ENCODE measurements at regions of chr11 and their contacts with region 1.

Region 1: DNA sequence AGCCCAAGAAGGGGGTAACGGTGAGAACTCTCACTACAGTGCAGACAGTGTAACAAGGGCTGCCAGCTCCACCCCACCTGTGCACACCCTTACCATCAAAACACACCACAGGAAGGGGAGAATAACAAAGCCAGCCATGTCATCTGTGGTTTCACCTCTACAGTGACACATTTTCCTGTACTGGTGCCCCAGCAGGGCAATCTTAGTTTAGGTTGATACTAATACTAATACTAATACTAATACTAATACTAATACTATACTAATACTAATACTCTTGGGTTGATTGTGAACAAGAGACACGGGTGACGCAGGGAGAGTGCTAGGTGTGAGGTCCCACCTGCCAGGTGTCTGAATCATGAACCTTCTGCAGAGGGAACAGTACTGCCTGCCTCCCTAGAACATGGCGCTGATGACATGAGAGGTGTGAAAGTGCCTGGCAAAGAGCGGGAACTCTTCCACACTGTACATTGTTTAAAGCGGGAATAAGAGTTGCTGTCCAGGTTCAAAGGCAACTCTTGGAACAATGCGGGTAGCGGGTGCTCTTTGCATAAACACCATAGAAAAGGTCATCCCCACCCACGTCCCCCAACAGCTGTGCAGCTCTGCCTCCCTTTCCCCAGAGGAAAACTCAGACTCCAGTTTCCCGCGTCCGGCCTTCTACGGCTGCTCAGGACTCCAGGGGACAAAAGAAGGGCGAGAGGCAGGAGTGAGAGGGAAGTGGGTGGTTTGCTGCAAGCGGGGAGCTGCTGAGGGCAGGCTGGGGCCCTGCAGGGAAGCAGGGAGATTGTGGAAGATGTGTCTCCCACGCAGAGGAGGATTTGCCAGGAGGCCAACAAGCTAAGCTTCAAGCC is 25.0 kb upstream of the TMPRSS4 start:
- DNase-seq: peak; percentile 47
- ATAC-seq: peak; percentile 91
- H3K4me3 Mint-ChIP-seq: peak overlapping the region; percentile 78
- H3K27ac Mint-ChIP-seq: peak overlapping the region; percentile 96
- H3K4me1 Mint-ChIP-seq: peaks cover 55% of the 10 kb centered on the region
- H3K27me3 Mint-ChIP-seq: no peaks in the 10 kb centered on the region

Region 2: DNA sequence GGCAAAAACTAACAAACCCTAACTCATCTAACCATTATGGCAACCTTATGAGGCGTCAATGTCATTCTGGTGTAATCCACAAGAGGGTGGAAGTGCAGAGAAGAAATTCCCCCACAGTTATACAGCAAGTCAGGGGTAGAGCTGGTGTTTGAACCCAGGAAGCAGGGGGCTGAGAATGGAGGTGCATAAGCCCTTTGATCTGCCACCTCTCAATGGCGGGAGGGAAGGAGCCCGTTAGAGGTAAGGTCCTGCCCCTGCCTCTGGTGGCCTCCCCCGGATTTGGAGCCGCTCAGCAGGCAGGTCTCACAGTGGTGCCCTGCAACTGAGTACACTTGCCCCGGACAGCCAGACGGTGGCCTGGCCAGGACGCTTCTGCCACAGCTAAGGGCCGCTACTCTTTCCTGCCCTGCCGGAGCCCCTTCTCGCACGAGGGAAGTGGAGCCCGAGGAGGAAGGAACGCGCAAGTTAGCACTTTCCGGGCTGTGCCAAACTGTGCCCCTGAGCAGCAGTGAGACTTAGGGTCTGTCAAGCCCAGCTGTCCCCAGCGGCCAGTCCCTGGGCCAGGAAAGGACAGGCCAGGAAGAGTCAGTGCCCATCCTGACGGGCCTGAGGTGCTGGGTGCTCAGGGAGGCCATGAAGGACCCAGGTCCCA is 228.4 kb before region 1 on chr11:
- POLR2A ChIA-PET with region 1: interaction called, 16 read pairs
- DNase-seq: peak; percentile 69
- ATAC-seq: peak; percentile 81
- H3K4me3 Mint-ChIP-seq: peak overlapping the region; percentile 59
- H3K27ac Mint-ChIP-seq: peak overlapping the region; percentile 88
- H3K4me1 Mint-ChIP-seq: peaks cover 50% of the 10 kb centered on the region
- H3K27me3 Mint-ChIP-seq: no peaks in the 10 kb centered on the region

Region 3: DNA sequence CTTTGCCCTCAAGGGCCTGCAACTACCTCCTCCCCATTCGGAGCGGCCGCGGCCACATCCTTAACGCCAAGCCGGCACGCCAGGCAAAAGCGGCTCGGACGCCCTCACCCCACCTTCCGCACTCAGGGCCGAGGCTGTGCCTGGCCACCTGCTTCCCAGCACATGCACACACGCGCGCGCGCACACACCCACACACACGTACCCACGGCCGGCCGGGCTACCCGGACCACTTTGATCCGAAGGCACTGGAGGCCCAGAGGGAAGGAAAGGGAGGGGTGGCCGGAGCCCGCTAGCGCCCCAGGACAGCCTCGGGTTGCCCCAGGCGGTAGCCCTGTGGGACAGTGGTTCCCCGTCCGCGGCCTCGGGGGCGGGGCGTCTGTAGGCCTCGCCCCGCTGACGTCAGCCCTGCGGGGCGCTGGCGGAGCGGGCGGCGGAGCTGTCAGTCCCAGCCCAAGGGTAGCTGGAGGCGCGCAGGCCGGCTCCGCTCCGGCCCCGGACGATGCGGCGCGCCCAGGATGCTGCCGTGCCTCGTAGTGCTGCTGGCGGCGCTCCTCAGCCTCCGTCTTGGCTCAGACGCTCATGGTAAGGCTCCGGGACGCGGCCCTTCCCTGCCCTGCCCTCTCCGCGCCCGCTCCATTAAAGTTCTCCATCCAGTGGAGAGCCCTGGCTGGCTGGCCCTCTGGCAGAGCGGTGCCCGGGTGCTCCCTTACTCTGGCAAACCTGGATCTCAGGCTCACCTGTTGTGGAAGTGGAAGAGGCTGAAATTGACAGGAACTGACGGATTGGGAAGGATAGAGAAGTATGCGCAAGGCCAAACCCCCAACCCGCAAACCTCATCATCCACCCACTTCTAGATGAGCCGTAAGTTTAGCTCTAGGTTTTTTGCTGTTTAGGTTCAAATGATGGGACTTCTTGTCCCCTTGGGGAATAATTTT is 65.6 kb before region 1 on chr11 and contains the start of gene IL10RA:
- POLR2A ChIA-PET with region 1: interaction called, 90 read pairs
- DNase-seq: peak; percentile 95
- ATAC-seq: peak; percentile 89
- H3K4me3 Mint-ChIP-seq: peak within 1 kb of the TSS; percentile 87
- H3K27ac Mint-ChIP-seq: peak within 1 kb of the TSS; percentile 83
- H3K4me1 Mint-ChIP-seq: peaks cover 56% of the 10 kb centered on the region
- H3K27me3 Mint-ChIP-seq: no peaks in the 10 kb centered on the region
- total RNA-seq, gene IL10RA: 304 TPM

Region 4: DNA sequence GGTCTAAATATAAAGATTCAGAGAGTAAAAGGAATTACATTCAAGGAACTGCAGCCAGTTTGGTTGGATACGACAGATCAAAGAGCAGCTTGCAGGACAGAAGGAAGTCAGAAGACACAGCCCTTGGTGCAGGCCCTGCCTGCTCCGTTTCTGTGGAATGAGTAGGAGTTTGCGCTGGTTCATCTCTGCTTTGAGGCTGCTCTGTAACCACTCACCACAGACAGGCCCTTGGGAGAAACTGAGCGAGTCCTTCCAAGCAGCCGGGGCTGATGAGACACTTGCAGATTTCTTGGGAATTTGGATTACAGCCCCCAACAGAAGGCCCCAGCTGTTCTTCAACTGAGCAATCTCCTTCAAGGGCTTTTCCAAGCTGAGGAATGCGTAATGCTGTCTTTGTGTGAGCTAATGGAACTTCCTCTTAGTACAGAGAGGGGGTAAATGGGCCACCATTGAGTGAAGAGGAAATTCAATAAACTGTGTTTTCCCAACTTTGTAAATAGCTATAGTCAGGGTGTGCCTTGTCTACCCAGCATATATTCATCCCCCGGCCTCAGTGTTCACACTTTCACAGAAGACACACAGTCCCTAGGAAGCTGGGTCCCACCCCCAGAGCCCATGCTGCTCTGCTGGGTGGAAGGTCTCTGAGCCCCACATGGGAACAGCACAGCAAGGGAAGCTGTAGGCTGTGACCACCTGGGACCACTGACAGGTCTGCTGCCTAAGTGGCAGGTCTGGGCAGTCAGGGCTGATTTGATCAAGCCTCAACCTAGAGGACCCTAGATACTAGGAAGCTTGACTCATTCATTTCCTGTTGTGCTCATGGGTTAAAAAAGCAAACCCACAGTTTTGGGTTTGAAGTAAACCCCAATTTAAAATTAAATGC is 49.1 kb before region 1 on chr11:
- POLR2A ChIA-PET with region 1: interaction called, 128 read pairs
- DNase-seq: peak; percentile 70
- ATAC-seq: peak; percentile 41
- H3K4me3 Mint-ChIP-seq: peak overlapping the region; percentile 65
- H3K27ac Mint-ChIP-seq: peak overlapping the region; percentile 96
- H3K4me1 Mint-ChIP-seq: peaks cover 83% of the 10 kb centered on the region
- H3K27me3 Mint-ChIP-seq: no peaks in the 10 kb centered on the region

Measured in activated naive CD8-positive, alpha-beta T cell treated with anti-CD3 and anti-CD28 coated beads, Interleukin-2, amount 10 ng/mL, durations not matched to agents 7 days and 5 days (primary cell).